MCF 10A (cell line): ENCODE measurements at regions of chr3 and their contacts with region 1.

Region 1: DNA sequence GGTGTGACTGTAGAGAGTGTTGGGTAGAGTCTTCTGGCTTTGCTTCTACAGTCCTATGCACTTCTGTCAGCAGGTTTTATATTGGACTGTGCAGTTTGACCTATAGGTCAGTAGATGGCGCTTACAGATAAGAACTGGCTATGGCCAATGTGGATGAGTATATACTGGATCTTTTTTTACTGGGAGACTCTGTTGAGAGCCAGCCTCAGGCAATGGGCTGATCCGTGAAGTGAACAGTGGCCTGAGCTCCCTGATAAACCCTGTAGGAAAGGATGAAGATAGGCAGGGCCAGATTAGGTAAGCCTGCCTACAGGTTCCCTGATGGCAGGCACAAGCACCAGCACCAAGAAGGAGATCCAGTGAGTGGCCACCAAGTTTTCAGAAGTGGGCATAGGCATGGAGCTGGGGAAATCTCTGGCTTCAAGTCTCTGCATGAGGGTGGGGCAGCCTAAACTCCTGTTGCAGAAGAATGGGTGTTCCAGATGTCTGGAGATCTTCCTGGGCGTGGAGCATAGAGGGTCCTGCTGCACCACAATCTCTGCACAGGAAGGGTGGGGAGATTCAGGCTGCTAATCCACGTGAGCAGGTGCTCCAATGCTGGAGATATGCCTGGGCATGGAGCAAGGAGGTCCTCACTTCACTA is 326.0 kb upstream of the SGO1 start:
- DNase-seq: peak; percentile 62
- H3K4me3 Mint-ChIP-seq: no peak overlapping the region
- H3K27ac Mint-ChIP-seq: no peak overlapping the region
- H3K4me1 Mint-ChIP-seq: peaks cover 5% of the 10 kb centered on the region
- H3K27me3 Mint-ChIP-seq: no peaks in the 10 kb centered on the region
- CTCF ChIP-seq: peak; percentile 76

Region 2: DNA sequence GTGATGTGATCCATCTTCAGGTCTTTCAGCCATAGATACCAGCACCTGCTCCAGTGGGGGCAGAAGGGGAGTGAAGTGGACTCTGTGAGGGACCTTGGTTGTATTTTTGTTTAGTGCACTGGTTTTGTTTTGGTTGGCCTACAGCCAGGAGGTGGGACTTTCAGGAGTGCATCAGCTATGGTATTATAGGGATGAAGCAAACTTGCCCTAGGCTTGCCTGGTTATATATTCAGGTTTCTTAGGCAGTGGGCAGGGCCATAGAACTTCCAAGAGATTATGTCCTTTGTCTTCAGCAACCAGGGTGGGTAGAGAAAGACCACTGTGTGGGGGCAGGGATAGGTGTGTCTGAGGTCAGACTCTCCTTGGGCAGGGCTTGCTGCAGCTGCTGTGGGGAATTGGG is 11.3 kb after region 1 on chr3:
- CTCF ChIA-PET with region 1: interaction called, 22 read pairs
- POLR2A ChIA-PET with region 1: interaction called, 3 read pairs
- intact Hi-C with region 1: no loop called
- DNase-seq: peak; percentile 36
- H3K4me3 Mint-ChIP-seq: no peak overlapping the region
- H3K27ac Mint-ChIP-seq: no peak overlapping the region
- H3K4me1 Mint-ChIP-seq: no peaks in the 10 kb centered on the region
- H3K27me3 Mint-ChIP-seq: no peaks in the 10 kb centered on the region
- CTCF ChIP-seq: no peak

Region 3: DNA sequence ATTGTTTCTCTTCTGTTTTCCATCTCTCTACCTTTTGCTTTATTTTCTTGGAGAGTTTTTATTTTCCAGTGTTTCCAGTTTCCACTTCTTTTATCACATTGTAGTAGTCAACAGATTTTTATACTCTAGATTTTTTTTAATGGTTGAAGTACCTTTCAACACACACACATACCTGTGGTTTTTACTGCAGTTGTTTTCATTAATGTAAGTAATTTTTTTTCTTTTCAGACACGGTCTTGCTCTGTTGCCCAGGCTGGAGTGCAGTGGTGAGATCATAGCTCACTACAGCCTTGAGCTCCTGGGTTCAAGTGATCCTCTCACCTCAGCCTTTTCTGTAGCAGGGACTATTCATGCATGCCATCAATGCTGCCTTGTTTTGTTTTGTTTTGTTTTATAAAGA is 146.5 kb after region 1 on chr3:
- CTCF ChIA-PET with region 1: no interaction called
- POLR2A ChIA-PET with region 1: no interaction called
- intact Hi-C with region 1: no loop called
- DNase-seq: no peak
- H3K4me3 Mint-ChIP-seq: no peak overlapping the region
- H3K27ac Mint-ChIP-seq: no peak overlapping the region
- H3K4me1 Mint-ChIP-seq: no peaks in the 10 kb centered on the region
- H3K27me3 Mint-ChIP-seq: no peaks in the 10 kb centered on the region
- CTCF ChIP-seq: no peak

Region 4: GRCh38 chr3:20930034-20930433 is 418.1 kb after region 1 on chr3:
- CTCF ChIA-PET with region 1: interaction called, 28 read pairs
- POLR2A ChIA-PET with region 1: no interaction called
- intact Hi-C with region 1: loop called (anchors 1 kb)
- DNase-seq: peak; percentile 52
- H3K4me3 Mint-ChIP-seq: no peak overlapping the region
- H3K27ac Mint-ChIP-seq: no peak overlapping the region
- H3K4me1 Mint-ChIP-seq: no peaks in the 10 kb centered on the region
- H3K27me3 Mint-ChIP-seq: no peaks in the 10 kb centered on the region
- CTCF ChIP-seq: peak; percentile 40

Region 5: DNA sequence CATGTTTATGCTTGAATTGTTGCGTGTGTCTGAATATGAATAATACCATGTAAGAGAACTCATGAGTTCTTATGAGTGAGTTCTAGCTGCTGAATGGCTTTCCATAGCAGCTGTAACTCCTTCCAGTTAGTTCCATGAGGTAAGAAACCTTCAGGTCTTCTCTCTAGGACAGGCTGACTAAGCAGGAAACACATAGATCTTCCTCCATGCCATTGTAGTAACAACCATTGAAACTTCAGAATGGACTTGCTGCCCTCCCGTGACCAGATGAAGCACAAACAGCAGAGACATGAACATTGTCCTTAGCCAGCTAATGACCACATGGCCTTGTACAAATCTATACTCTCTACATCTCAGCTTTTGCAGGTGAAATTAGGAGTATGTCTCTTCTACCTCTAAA is 1039.0 kb after region 1 on chr3:
- CTCF ChIA-PET with region 1: interaction called, 6 read pairs
- POLR2A ChIA-PET with region 1: no interaction called
- intact Hi-C with region 1: loop called (anchors 1 kb)
- DNase-seq: peak; percentile 57
- H3K4me3 Mint-ChIP-seq: no peak overlapping the region
- H3K27ac Mint-ChIP-seq: no peak overlapping the region
- H3K4me1 Mint-ChIP-seq: no peaks in the 10 kb centered on the region
- H3K27me3 Mint-ChIP-seq: no peaks in the 10 kb centered on the region
- CTCF ChIP-seq: peak; percentile 25